Mammary epithelial cell (primary cell): ENCODE measurements at regions of chr18 and their contacts with region 1.

Region 1: DNA sequence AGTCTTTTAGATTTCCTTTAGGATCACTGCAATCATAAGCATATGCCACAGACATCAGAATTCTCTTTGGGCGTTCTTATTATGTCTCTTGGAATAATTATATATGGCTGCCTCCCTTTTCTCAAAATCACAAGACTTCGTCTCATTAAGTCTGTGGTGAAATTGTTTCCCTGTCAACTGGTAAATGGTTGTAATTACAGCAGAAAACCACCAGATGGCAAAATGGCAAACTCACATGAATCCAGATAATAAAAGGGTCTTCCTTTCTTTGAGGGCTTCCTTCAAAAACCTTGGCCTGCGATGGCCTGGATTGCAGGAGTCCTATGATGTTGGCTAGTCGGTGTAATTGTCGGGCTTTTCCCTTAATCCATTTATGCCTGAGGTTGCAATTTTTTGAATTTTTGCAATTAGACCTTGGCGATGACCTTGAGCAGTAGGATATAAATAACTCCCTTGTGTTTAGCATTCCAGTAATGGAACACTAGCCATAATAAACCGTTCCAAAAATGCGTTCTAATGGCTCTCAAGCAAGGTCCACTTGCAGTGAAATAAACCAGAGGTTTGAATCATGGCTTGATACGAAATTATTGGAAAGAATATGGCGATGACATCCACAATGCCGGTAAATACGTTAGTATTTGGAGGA is 656.4 kb downstream of the MBD2 start:
- DNase-seq: no peak
- H3K4me3 ChIP-seq: no peak overlapping the region
- H3K27ac ChIP-seq: no peak overlapping the region
- H3K4me1 ChIP-seq: no peaks in the 10 kb centered on the region
- H3K27me3 ChIP-seq: no peaks in the 10 kb centered on the region
- CTCF ChIP-seq: peak; percentile 45 to 69

Region 2: GRCh38 chr18:53864770-53865169 is 296.7 kb after region 1 on chr18:
- CTCF ChIA-PET with region 1: no interaction called
- dilution Hi-C with region 1: no loop called
- in situ Hi-C with region 1: no loop called
- intact Hi-C with region 1: loop called (anchors 2 kb)
- DNase-seq: peak; percentile 2
- H3K4me3 ChIP-seq: no peak overlapping the region
- H3K27ac ChIP-seq: no peak overlapping the region
- H3K4me1 ChIP-seq: no peaks in the 10 kb centered on the region
- H3K27me3 ChIP-seq: peaks cover 2% of the 10 kb centered on the region
- CTCF ChIP-seq: peak; percentile 16 to 50

Region 3: DNA sequence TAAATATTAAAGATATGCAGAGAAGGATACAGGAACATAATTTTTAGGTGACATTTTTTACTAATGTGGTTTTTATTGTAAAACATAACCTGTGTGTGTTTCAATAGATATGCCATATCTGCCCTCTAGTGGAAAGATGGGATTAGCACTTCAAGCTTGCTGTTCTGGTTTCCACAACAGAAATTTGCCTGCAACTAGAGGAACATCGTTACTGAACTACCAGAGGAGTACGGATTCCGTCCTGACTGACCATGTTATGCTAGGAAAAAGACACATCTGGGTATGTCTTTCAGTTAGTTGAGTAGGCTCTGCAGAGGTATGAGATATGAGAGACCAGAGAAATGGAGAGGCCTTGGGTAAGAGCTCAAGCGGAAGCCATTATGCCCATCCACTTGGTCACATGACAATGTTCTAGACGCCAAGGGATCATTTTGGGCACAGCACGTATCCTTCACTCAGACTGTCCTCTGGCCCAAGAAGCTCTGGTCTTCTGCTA is 551.5 kb after region 1 on chr18:
- CTCF ChIA-PET with region 1: no interaction called
- dilution Hi-C with region 1: no loop called
- in situ Hi-C with region 1: loop called in 1 of 2 experiments (anchors 10 kb)
- intact Hi-C with region 1: loop called (anchors 1 kb)
- DNase-seq: peak; percentile 51
- H3K4me3 ChIP-seq: no peak overlapping the region
- H3K27ac ChIP-seq: no peak overlapping the region
- H3K4me1 ChIP-seq: no peaks in the 10 kb centered on the region
- H3K27me3 ChIP-seq: no peaks in the 10 kb centered on the region
- CTCF ChIP-seq: peak; percentile 80 to 95